ENCODE measurements at regions of chr4 and their contacts with region 1.

Region 1: DNA sequence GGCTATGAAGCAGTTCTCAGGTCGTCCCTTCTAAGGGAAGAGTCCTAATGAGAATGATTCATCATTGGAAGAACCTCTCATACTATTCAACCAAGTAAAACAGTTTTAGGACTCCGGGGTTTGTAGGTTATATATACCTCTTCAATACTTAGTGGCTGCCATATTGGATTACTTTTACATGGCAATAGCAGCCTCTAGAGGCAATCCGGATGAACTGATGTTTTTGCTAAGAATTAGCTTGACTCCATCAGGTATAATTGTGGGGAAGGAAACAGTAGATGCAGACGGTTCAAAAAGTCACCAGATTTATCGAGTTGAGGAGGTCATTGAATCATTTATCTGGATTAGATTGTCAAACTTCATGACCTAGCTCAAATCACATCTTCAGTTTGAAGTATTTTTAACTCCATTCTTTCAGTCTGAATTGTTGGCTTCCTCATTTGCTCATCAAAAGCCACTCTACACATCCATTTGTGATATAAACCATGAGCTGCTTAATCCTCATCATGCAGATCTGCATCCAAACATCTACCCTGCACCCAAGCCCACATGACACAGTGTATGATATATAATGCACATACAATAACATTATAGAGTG is 28.4 kb downstream of the GUCY1B1 start:
- H3K4me3 Mint-ChIP-seq: no peak overlapping the region
- H3K27ac Mint-ChIP-seq: no peak overlapping the region
- H3K4me1 Mint-ChIP-seq: no peaks in the 10 kb centered on the region
- H3K27me3 Mint-ChIP-seq: no peaks in the 10 kb centered on the region

Region 2: GRCh38 chr4:155529272-155529671 is 257.9 kb before region 1 on chr4:
- intact Hi-C with region 1: loop called (anchors 1 kb)
- H3K4me3 Mint-ChIP-seq: no peak overlapping the region
- H3K27ac Mint-ChIP-seq: no peak overlapping the region
- H3K4me1 Mint-ChIP-seq: no peaks in the 10 kb centered on the region
- H3K27me3 Mint-ChIP-seq: no peaks in the 10 kb centered on the region

Measured in dendritic cell treated with granulocyte-macrophage colony-stimulating factor and Interleukin-4, amounts not matched to agents 40 ng/mL and 50 ng/mL, for 4 days (primary cell).